ENCODE measurements at regions of chr10 and their contacts with region 1.

Region 1: DNA sequence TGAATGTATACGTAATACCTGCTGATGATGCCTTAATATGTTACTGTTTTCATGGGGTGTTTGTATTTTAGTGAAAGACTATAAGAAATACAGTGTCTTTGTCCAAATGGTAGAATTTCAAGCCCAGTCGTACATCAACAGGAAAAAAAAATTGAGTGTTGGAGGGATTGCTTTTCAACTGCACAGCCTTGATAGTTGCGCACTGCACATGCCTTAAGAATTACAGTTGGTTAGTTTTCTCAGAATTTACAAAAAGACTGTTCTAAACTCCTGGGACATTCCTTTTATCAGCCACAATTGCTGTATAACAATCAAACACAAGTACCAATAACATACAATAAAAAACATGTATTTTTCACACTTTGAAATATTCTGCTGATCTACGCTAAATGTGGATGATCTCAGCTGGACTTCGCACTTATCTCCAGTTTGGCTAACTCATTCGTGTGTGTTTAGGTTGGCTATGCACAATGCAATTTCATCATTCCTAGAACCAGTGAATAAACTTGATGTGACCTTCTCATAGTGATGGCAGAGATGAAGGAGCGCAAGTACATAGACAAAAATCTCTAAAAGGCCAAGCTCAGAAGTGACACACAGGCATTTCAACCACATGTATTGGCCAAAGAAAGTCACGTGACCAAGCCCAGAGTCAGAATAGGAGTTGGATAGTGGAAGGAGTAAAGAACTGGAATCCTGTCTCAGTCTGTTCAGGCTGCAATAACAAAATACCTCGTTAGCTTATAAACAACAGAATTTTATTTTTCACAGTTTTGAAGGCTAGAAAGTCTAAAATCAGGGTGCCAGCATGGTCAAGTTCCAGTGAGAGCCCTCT is 152.3 kb downstream of the IPMK start:
- DNase-seq: no peak
- H3K4me3 ChIP-seq: no peak overlapping the region
- H3K27ac ChIP-seq: no peak overlapping the region
- H3K4me1 ChIP-seq: no peaks in the 10 kb centered on the region
- H3K27me3 ChIP-seq: no peaks in the 10 kb centered on the region
- CTCF ChIP-seq: no peak
- POLR2A ChIP-seq: no peak

Region 2: GRCh38 chr10:58225654-58226053 is 110.2 kb after region 1 on chr10:
- CTCF ChIA-PET with region 1: no interaction called
- POLR2A ChIA-PET with region 1: no interaction called
- dilution Hi-C with region 1: no loop called
- intact Hi-C with region 1: no loop called
- DNase-seq: no peak
- H3K4me3 ChIP-seq: no peak overlapping the region
- H3K27ac ChIP-seq: no peak overlapping the region
- H3K4me1 ChIP-seq: no peaks in the 10 kb centered on the region
- H3K27me3 ChIP-seq: no peaks in the 10 kb centered on the region
- CTCF ChIP-seq: no peak
- POLR2A ChIP-seq: no peak

Region 3: DNA sequence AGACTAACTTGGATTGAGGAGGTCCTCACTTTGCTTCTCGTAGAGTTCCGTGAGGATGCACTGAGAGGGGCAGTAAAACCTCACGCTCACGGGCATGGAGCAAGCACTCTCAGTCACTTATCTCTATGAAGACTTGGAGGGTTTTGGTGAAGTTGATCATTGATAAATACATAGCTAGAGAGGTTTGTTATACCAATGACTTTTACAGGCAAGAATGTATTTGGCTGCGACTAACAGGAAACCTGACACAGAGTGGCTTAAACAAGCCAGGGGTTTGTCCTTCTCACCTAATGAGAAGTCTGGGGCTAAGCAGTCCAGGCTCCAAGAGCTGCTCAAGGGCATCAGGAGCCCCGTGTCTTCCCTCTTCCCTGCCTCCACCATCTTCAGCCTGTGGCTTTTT is 403.3 kb after region 1 on chr10:
- CTCF ChIA-PET with region 1: no interaction called
- POLR2A ChIA-PET with region 1: no interaction called
- dilution Hi-C with region 1: no loop called
- intact Hi-C with region 1: loop called (anchors 5 kb)
- DNase-seq: no peak
- H3K4me3 ChIP-seq: no peak overlapping the region
- H3K27ac ChIP-seq: no peak overlapping the region
- H3K4me1 ChIP-seq: no peaks in the 10 kb centered on the region
- H3K27me3 ChIP-seq: peaks cover 2 to 18% of the 10 kb centered on the region in 2 experiments
- CTCF ChIP-seq: no peak
- POLR2A ChIP-seq: no peak

Measured in endothelial cell of umbilical vein (primary cell).